ENCODE measurements at regions of chr14 and their contacts with region 1.

Region 1: DNA sequence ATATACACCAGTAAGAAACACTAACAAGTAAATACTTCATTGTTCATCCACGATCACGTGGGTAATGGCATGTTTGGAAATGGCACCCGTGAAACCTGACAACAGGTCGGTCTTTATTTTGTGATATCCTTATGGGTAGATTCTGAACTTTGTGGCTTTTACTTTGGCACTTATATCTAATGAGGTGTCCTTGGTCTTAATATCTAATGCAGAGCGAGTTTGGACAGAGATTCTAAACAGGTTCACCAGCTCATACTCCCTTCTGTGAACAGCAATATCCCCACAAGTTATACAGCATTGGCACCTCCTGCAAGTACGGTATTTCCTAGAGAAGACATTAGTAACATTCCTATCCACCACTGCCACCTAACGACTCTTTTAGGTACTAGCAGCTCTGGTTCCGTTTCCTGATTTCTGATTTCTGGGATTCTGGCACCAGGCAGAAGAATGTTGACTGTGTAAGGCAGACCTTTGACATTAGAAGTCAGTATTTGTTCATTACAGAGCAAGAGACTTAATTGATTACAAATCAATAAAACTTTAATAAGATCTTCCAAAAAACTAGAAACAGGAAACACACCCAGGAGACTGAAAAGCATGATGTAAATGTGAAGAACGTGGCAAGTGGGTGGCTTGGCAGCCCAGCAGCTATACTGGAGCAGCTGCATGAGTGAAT is 2.4 kb downstream of the ANG start:
- DNase-seq: peak; percentile 70
- H3K4me3 ChIP-seq: no peak overlapping the region
- H3K27ac ChIP-seq: no peak overlapping the region
- H3K4me1 ChIP-seq: no peaks in the 10 kb centered on the region
- CTCF ChIP-seq: peak; percentile 96

Region 2: GRCh38 chr14:20530771-20531571 is 160.0 kb before region 1 on chr14:
- CTCF ChIA-PET with region 1: no interaction called
- POLR2A ChIA-PET with region 1: interaction called, 3 read pairs
- intact Hi-C with region 1: loop called (anchors 2 kb)
- DNase-seq: peak; percentile 74
- H3K4me3 ChIP-seq: no peak overlapping the region
- H3K27ac ChIP-seq: no peak overlapping the region
- H3K4me1 ChIP-seq: no peaks in the 10 kb centered on the region
- CTCF ChIP-seq: peak; percentile 88

Region 3: GRCh38 chr14:20662968-20663732 is 27.8 kb before region 1 on chr14:
- CTCF ChIA-PET with region 1: no interaction called
- POLR2A ChIA-PET with region 1: no interaction called
- intact Hi-C with region 1: loop called (anchors 1 kb)
- DNase-seq: peak; percentile 59
- H3K4me3 ChIP-seq: no peak overlapping the region
- H3K27ac ChIP-seq: no peak overlapping the region
- H3K4me1 ChIP-seq: peaks cover 10% of the 10 kb centered on the region
- CTCF ChIP-seq: peak; percentile 75

Measured in OCI-LY7 (cell line).